AG04450 (cell line): ENCODE measurements at regions of chr6 and their contacts with region 1.

Region 1: DNA sequence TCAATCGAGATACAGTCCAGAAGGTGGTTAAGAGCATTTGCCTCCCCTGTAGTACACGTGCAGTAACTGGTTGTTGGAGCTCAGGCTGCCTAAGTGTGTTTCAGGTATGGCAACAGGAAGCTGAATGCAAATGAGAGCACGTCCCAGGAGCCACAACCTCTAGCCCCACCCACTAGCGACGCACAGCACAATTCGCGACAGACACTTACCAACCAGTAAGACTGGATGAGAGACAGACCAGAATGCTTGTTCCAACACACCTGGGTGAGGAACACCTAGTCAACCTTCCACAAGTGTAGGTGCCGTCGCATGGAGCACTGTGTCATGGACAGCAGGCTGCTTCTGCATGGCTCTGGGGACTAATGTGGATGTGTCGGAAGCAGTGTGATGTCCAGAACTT is 7.2 kb upstream of the SERPINB1 start:
- DNase-seq: no peak
- H3K4me3 ChIP-seq: no peak overlapping the region
- H3K27ac ChIP-seq: no peak overlapping the region
- H3K27me3 ChIP-seq: no peaks in the 10 kb centered on the region
- CTCF ChIP-seq: no peak

Region 2: GRCh38 chr6:2931970-2932748 is 83.3 kb after region 1 on chr6:
- CTCF ChIA-PET with region 1: interaction called, 99 read pairs
- POLR2A ChIA-PET with region 1: no interaction called
- DNase-seq: peak; percentile 4
- H3K4me3 ChIP-seq: no peak overlapping the region
- H3K27ac ChIP-seq: no peak overlapping the region
- H3K27me3 ChIP-seq: peaks cover 7% of the 10 kb centered on the region
- CTCF ChIP-seq: peak; percentile 99

Region 3: DNA sequence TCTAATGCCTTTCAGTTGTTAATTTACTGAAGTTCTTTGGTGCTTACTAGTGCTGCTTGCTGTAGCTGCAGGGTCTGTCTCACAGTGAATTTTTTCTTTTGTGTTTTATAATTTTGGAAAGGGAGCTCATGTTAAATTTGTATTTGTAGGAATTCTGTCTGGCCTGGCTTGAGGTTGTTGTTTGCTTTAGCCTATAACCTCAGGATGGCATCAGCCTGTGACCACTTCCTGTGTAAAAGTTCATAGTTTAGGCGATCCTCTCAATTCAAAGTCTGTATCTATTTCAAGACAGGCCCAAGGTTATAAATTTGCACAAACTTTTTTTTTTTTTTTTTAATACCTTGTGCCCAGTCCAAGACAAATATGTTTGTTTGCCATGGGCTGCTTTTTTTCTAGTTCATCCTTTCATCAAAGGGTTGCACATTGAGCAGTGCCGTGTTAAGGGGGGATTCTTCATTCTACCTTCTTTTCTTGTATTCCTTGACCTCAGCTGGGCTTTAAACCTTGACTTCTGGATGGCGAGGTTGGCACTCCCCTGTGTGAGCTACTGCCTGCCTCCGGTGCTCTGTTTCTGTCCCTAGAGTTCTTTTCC is 226.8 kb after region 1 on chr6:
- CTCF ChIA-PET with region 1: no interaction called
- POLR2A ChIA-PET with region 1: no interaction called
- DNase-seq: no peak
- H3K4me3 ChIP-seq: no peak overlapping the region
- H3K27ac ChIP-seq: no peak overlapping the region
- H3K27me3 ChIP-seq: no peaks in the 10 kb centered on the region
- CTCF ChIP-seq: no peak